ENCODE measurements at regions of chr12 and their contacts with region 1.

Region 1: DNA sequence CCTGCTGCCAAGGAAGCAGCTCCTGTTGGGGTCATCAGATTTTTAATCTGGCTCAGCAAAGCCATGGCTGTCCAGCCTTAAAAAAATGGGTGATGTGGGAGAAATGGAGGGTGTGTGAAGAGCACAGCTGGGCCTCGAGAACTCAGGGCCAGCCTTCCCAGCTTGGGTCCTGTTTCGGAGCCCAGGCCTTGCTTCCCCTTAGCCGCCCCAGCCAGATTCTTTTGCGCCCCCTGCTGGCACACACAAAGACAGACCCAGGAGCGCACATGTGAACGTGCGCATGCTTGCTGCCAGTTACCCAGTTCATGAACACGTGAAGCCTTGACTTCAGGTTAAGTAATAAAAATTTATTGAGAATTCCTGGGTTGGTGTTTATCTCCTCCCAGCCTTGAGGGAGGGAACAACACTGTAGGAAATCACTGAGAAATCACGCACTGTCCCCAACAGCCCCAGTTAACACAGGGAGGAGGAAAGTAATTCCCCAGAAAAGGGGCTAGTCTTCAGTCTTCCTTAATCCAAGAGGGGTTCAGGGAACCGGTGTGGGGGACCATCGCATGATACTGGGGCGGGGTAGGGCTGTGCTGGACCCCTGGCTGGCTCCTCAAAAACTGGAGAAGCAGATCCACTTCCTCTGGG is 5.3 kb downstream of the PHB2 start:
- DNase-seq: peak; percentile 88
- H3K4me3 ChIP-seq: peak overlapping the region; percentile 98
- H3K27ac ChIP-seq: peak overlapping the region; percentile 93
- H3K4me1 ChIP-seq: peaks cover 52% of the 10 kb centered on the region
- H3K27me3 ChIP-seq: no peaks in the 10 kb centered on the region
- CTCF ChIP-seq: peak; percentile 99

Region 2: GRCh38 chr12:6752921-6753771 is 212.0 kb before region 1 on chr12 and contains the start of gene MLF2:
- CTCF ChIA-PET with region 1: no interaction called
- POLR2A ChIA-PET with region 1: no interaction called
- intact Hi-C with region 1: loop called (anchors 1 kb)
- DNase-seq: peak; percentile 95 to 100
- H3K4me3 ChIP-seq: peak within 1 kb of the TSS; percentile 77
- H3K27ac ChIP-seq: peak within 1 kb of the TSS; percentile 83
- H3K4me1 ChIP-seq: peaks cover 16% of the 10 kb centered on the region
- H3K27me3 ChIP-seq: no peaks in the 10 kb centered on the region
- CTCF ChIP-seq: no peak; the same call in 1 of the 2 replicates
- total RNA-seq, gene MLF2: 349 and 379 TPM in 2 replicates

Region 3: GRCh38 chr12:6873094-6874014 is 91.8 kb before region 1 on chr12 and contains the start of gene SPSB2:
- CTCF ChIA-PET with region 1: interaction called, 6 read pairs
- POLR2A ChIA-PET with region 1: interaction called, 4 read pairs
- intact Hi-C with region 1: loop called (anchors 1 kb)
- DNase-seq: peak; percentile 91 to 100
- H3K4me3 ChIP-seq: peak within 1 kb of the TSS; percentile 84
- H3K27ac ChIP-seq: peak within 1 kb of the TSS; percentile 37
- H3K4me1 ChIP-seq: peaks cover 36% of the 10 kb centered on the region
- H3K27me3 ChIP-seq: no peaks in the 10 kb centered on the region
- CTCF ChIP-seq: no peak
- total RNA-seq, gene SPSB2: 28.9 and 30.1 TPM in 2 replicates

Region 4: DNA sequence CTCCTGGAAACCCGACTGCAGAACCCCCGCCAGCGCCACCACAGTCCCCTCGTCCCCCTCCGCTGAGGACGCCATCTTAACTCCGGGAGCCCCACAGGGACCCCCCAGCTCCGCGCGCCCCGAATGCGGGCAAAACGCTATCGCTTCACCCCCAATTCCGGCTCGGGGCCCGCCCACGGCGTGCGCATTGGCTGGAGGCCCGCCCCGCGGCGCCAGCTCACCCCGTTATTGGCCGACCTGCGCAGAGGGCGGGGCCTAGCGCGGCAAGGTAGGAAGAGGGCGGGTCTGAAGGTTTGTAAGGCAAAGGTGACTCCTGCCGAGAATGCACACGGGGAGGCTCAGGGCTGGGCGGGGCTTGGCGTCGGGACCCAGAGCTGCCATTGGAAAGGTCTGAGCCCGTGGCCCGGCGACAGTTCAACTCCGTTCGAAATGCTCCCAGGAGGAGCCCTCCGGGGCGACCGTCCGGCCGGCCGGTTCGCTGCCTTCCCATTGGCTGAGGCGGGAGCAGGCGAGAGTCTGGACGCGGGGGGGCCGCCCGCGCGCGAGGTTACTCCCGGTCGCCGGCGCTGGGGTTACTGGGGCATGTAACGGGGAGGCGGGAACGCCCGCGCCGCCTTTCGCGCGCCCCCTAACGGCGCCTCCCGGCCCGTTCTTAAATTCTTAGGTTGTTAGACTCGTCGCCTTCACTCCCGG is 53.4 kb after region 1 on chr12 and contains the start of gene LPCAT3:
- CTCF ChIA-PET with region 1: interaction called, 4 read pairs
- POLR2A ChIA-PET with region 1: interaction called, 5 read pairs
- intact Hi-C with region 1: loop called (anchors 1 kb)
- DNase-seq: peak; percentile 96 to 100
- H3K4me3 ChIP-seq: peak within 1 kb of the TSS; percentile 79
- H3K27ac ChIP-seq: peak within 1 kb of the TSS; percentile 74
- H3K4me1 ChIP-seq: peaks cover 37% of the 10 kb centered on the region
- H3K27me3 ChIP-seq: no peaks in the 10 kb centered on the region
- CTCF ChIP-seq: peak; percentile 83
- total RNA-seq, gene LPCAT3: 53.8 and 102 TPM in 2 replicates

Region 5: GRCh38 chr12:7108796-7109571 is 143.8 kb after region 1 on chr12 and contains the start of gene C1RL:
- CTCF ChIA-PET with region 1: interaction called, 5 read pairs
- POLR2A ChIA-PET with region 1: interaction called, 5 read pairs
- intact Hi-C with region 1: loop called (anchors 1 kb)
- DNase-seq: peak; percentile 72 to 91
- H3K4me3 ChIP-seq: peak within 1 kb of the TSS; percentile 79
- H3K27ac ChIP-seq: peak within 1 kb of the TSS; percentile 76
- H3K4me1 ChIP-seq: peaks cover 28% of the 10 kb centered on the region
- H3K27me3 ChIP-seq: no peaks in the 10 kb centered on the region
- CTCF ChIP-seq: peak; percentile 97
- total RNA-seq, gene C1RL: 70.4 and 72.9 TPM in 2 replicates